ENCODE measurements at regions of chr1 and their contacts with region 1.

Region 1: DNA sequence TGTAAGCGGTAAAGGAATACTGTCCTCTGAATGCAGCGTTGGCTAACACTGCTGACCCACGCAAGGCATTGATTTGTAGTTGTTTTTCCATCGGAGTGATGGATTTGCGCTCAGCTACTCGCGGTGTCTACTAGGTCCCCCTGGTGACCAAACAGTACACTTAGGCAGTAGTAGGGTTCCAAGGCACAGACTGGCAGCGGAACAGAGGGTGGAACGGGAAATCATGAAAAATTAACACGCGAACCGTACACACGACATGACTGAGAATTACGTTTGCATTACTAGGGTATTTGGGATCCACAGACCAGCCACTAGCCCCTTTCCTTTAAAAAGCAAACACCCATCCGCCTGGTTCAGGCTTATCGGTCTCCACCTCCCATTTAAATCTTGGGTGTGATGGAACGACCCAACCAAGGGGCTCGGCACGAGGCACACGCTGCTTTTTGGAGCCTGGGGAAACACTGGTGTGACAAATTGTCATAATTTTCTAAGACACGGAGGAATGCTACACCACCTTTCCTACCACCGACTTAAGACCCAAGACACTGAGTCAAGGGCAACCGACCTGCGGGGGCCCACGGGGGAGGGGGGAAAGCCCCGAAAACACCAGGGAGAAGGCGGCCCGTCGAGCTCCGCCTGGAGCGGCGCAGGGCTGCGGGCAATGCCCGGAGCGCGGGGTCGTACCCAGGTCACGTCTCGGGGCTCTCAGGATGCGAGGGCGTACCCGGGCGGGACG is 699 bp downstream of the DIPK1A start:
- DNase-seq: peak; percentile 33 to 83
- H3K4me3 ChIP-seq: peak overlapping the region; percentile 67 to 92
- H3K27ac ChIP-seq: peak overlapping the region; percentile 92 to 98
- H3K4me1 ChIP-seq: peaks cover 0 to 16% of the 10 kb centered on the region in 2 donors
- H3K27me3 ChIP-seq: no peaks in the 10 kb centered on the region
- CTCF ChIP-seq: peak; percentile 64 to 75 (median 71)

Region 2: DNA sequence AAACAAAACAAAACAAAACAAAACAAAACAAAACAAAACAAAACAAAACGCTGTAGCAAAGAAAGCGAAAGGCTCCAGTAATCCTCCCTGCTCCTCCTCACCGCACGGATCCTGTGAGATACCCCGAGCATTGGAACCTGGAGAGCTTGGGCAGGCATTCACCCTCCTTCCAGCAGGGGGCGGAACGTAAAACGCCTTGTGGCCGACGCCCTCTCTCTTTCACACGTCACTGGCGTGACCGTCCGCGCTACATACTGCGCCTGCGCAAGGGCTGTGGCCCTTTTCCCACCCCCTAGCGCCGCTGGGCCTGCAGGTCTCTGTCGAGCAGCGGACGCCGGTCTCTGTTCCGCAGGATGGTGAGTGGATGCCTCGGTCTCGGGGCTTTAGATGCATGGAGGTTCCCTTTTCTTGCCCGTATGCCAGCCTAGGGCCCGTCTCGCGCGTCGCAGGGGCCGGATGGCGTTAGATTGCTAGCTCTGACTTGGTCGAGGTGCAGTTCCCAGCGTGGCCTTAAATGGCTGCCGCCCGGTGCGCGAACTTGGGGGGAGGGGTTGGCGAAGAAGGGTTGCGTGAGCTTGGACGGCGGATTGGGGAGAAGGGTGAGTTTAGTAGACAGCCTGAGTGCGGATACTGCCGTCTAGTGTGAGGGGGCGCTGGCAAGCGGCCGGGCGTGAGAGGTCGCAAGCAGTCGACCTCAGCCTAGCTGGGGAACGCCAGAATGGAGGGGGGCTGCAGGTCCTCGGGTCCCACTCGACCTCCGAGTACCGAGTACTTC is 128.6 kb before region 1 on chr1 and contains the start of gene RPL5:
- intact Hi-C with region 1: loop called (anchors 1 kb)
- DNase-seq: peak; percentile 81 to 98
- H3K4me3 ChIP-seq: peak within 1 kb of the TSS; percentile 80
- H3K27ac ChIP-seq: peak within 1 kb of the TSS; percentile 85 to 90
- H3K4me1 ChIP-seq: peaks cover 12 to 16% of the 10 kb centered on the region in 2 donors
- H3K27me3 ChIP-seq: no peaks in the 10 kb centered on the region
- CTCF ChIP-seq: peak; percentile 74 to 95 (median 92)
- total RNA-seq, gene RPL5: 617 TPM

Region 3: DNA sequence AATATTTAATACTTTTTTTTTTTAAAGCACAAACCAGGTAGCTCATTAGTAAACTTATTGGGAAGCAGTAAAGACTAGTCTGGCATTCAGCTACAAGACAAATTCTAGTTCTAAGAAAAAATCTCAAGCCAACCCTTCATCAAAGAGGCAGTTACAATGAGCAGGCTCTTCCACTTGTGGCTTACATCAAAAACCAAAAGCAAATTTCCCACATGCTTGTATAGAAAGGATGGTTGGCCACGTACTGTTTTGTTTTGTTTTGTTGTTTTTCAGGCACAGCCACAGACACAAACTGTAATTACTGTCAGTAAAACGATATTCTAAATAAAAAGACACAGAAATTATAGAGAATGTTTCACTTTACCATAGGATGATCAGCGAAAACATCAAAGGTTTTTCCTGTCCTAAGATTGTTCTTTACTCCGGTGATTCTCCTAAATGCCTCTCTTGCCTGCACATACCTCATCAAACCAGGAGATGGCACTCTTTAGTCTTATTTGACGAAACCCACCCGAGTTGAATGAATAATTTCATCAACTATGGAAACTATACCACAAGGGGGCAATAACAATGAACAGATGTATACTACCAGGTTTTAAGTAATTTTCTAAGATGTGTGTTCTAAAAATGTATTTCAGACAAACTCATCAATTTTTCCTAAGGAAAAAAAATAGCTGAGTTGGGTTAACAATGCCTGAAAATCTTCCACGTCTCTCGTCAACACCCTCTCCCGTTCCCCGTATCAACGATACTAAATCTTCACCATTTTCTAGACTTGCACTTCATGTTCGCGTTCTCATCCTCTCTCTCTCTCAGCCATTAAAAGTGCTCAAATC is 101.8 kb before region 1 on chr1:
- intact Hi-C with region 1: loop called (anchors 1 kb)
- DNase-seq: peak in 1 of 2 donors; percentile 79
- H3K4me3 ChIP-seq: peak overlapping the region; percentile 8 to 33
- H3K27ac ChIP-seq: no peak overlapping the region
- H3K4me1 ChIP-seq: no peaks in the 10 kb centered on the region
- H3K27me3 ChIP-seq: no peaks in the 10 kb centered on the region
- CTCF ChIP-seq: peak; percentile 90 to 96 (median 92)

Region 4: DNA sequence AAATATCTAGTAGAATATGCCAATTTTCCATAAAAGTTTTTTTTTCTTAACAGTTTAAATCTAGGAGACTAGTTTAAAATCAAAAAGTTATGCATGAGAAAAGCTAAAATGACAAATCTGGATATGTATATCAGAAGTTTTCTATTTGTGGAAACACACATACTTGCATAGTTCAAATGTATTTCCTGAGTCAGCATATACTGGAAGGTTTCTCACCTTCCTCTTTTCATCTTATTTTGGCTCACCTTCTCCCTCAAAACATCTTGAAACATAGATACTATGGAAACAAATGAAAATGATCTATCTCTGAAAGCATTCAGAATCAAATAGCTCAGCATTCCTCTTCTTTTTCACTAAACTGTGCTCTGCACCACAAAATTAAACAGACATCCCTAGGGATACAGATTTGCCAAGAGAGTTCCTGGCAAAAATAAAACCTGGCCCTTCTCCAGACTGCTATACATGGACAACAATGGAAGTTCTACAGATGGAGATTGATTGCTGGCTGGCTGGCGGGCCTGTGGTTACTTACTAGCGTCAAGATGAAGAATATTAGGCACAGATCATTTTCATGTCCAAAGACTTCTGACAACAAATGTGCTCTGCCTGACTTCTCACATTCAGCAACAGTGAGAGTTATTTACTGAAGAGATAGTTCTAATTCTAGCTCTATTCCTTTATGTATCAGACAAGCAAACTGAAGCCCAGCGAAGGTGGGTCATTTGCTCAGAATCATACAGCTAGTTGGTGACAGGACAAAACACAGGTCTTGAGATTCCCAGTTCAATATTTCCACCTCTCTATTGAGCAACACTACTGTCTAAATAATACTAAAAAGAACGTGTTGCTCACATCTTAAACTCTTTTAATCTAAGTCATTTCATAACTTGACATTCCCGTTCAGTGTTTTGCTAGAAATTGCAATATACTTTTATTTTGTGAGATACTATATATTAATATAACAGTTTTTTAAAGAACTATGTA is 25.9 kb before region 1 on chr1:
- intact Hi-C with region 1: loop called (anchors 1 kb)
- DNase-seq: peak in 1 of 2 donors; percentile 71
- H3K4me3 ChIP-seq: peak overlapping the region in 1 of 2 donors; percentile 18
- H3K27ac ChIP-seq: peak overlapping the region; percentile 46 to 48
- H3K4me1 ChIP-seq: peaks cover 3 to 40% of the 10 kb centered on the region in 2 donors
- H3K27me3 ChIP-seq: no peaks in the 10 kb centered on the region
- CTCF ChIP-seq: no peak

Region 5: GRCh38 chr1:92994105-92994712 is 33.6 kb after region 1 on chr1:
- intact Hi-C with region 1: loop called (anchors 2 kb)
- DNase-seq: peak in 1 of 2 donors; percentile 87
- H3K4me3 ChIP-seq: no peak overlapping the region
- H3K27ac ChIP-seq: no peak overlapping the region
- H3K4me1 ChIP-seq: peaks cover 0 to 5% of the 10 kb centered on the region in 2 donors
- H3K27me3 ChIP-seq: no peaks in the 10 kb centered on the region
- CTCF ChIP-seq: peak; percentile 75 to 84 (median 77)

Region 6: GRCh38 chr1:93078986-93079654 is 118.6 kb after region 1 on chr1 and contains the start of gene MTF2:
- intact Hi-C with region 1: loop called (anchors 2 kb)
- DNase-seq: peak; percentile 53 to 94
- H3K4me3 ChIP-seq: peak within 1 kb of the TSS; percentile 78 to 89
- H3K27ac ChIP-seq: peak within 1 kb of the TSS; percentile 23 to 56
- H3K4me1 ChIP-seq: peaks cover 0 to 16% of the 10 kb centered on the region in 2 donors
- H3K27me3 ChIP-seq: no peaks in the 10 kb centered on the region
- CTCF ChIP-seq: no peak
- total RNA-seq, gene MTF2: 2.3 TPM

Measured in ascending aorta (tissue), 2 donors.